ENCODE measurements at regions of chr1 and their contacts with region 1.

Region 1: DNA sequence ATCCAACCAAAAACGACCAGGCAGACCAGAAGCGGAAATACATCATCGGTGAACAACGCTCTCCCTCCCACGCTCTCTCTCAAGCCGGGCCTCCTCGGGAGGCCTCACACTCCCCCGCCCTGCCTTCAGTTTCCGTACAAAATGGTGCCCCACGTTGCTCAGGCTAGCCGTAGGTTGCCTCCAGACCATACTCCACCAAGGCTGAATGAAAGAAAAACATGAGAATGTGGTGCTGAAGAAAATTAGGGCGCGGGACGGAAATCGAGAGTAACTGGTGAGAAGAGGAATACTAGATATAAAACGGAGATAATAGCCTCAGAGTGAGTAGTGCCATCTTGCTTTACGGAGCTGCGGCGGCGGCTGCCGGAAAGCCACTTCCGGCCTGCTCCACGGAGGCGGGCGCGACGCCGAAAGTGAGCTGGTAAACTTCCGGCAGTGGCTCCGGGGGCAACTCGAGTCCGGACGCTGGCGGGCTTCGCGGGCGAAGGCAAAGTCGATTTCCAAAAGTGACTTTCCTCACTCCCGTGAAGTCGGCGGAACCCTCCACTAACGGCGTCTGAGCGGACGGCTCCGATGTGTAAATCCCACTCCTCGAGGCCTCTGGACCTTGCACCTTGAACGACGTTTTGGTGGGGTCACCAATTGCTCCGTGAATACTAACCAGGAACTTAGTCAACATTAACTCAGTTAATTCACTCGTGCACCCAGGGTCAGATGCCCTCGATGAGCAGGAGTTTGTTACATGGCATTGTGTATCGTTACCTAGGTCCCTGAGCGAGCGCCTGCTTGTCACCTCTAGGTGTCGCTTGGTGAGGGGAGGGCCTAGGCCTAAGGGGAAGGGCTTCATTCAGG is at the start of gene SH3BP5L:
- DNase-seq: peak; percentile 93 to 96 (median 95)
- ATAC-seq: peak; percentile 95 to 97 (median 97)
- H3K4me3 ChIP-seq: peak within 1 kb of the TSS; percentile 55 to 89 (median 76)
- H3K27ac ChIP-seq: peak within 1 kb of the TSS; percentile 91 to 99 (median 95)
- H3K4me1 ChIP-seq: peaks cover 19 to 63% (median 48%) of the 10 kb centered on the region in 12 donors
- H3K27me3 ChIP-seq: no peaks in the 10 kb centered on the region
- CTCF ChIP-seq: peak; percentile 23 to 88 (median 64)
- POLR2A ChIP-seq: peak in 1 of 2 donors; percentile 70
- total RNA-seq, gene SH3BP5L: 15.8 to 47.1 (median 19.3) TPM

Region 2: GRCh38 chr1:248739572-248740205 is 86.4 kb before region 1 on chr1:
- intact Hi-C with region 1: no loop called
- DNase-seq: no peak
- ATAC-seq: no peak
- H3K4me3 ChIP-seq: no peak overlapping the region
- H3K27ac ChIP-seq: no peak overlapping the region
- H3K4me1 ChIP-seq: no peaks in the 10 kb centered on the region
- H3K27me3 ChIP-seq: peaks cover 0 to 8% (median 0%) of the 10 kb centered on the region in 9 donors
- CTCF ChIP-seq: no peak
- POLR2A ChIP-seq: no peak

Region 3: DNA sequence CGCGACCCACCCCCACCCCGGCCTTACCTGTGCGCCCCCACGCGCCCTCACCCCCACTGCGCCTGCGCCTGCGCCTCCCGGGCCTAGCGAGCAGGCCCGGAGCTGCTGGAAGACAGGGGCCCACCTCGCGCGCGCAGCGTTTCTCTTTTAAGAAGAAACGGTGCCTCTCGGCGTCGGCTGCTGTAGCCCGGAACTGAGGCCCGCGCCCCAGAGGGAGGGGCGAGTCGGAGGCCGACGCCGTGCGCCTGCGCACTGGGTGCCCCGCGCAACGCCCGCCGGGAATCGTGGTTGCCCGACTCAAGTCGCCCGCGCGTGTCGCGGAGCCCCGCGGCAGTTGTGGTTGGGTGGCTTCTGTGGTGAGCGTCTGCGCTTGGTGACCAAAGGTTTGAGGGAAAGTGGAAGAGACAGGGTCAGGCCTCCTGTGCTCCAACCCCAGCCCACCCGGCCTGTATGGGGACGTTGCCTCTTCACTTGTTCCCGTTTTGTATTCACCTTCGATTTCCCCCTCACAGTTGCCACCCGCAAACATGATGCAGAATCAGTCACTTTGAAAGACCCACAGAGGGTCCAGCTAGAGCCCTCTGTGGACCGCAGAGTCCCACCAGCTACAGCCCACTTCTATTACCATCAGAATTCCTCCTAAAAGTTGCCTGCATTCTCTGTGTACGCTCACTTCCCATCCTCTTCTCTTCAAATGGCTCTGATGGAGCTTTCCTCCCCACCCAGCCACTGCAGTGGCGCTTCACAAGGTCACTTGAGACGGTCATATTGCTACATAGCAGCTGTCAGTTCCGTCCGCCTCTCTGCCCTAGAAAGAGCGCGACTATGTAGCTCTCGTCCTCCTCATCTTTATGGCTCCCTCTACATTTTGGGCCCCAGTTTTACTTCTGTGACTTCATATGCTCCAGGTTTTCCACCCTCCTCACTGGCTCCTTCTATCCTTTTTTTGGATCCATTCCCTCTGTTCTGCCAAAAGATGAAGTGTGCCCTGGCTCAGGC is 33.1 kb after region 1 on chr1 and contains the start of gene ZNF692:
- intact Hi-C with region 1: loop called in 1 of 10 experiments (anchors 2 kb)
- DNase-seq: peak; percentile 97 to 99 (median 99)
- ATAC-seq: peak; percentile 89 to 93 (median 92)
- H3K4me3 ChIP-seq: peak within 1 kb of the TSS; percentile 45 to 75 (median 65)
- H3K27ac ChIP-seq: peak within 1 kb of the TSS; percentile 60 to 96 (median 92)
- H3K4me1 ChIP-seq: peaks cover 0 to 43% (median 31%) of the 10 kb centered on the region in 12 donors
- H3K27me3 ChIP-seq: no peaks in the 10 kb centered on the region
- CTCF ChIP-seq: peak in 2 of 12 donors; percentile 2 to 4
- POLR2A ChIP-seq: peak in 1 of 2 donors; percentile 85
- total RNA-seq, gene ZNF692: 7.4 to 19.7 (median 14.8) TPM

Region 4: GRCh38 chr1:248873409-248873992 is 47.4 kb after region 1 on chr1:
- intact Hi-C with region 1: loop called in 2 of 10 experiments (anchors 1 kb)
- DNase-seq: peak; percentile 92 to 95 (median 93)
- ATAC-seq: peak; percentile 92 to 95 (median 94)
- H3K4me3 ChIP-seq: peak overlapping the region; percentile 56 to 84 (median 70)
- H3K27ac ChIP-seq: peak overlapping the region; percentile 88 to 96 (median 93)
- H3K4me1 ChIP-seq: peaks cover 0 to 12% (median 0%) of the 10 kb centered on the region in 12 donors
- H3K27me3 ChIP-seq: no peaks in the 10 kb centered on the region
- CTCF ChIP-seq: no peak
- POLR2A ChIP-seq: peak in 1 of 2 donors; percentile 50

Measured in heart left ventricle (tissue), 16 donors.